Colonic mucosa (tissue), 4 donors: ENCODE measurements at regions of chr13 and their contacts with region 1.

Region 1: GRCh38 chr13:113393563-113394338 is 29.8 kb upstream of the GRTP1 start:
- DNase-seq: peak; percentile 78
- H3K4me3 ChIP-seq: peak overlapping the region; percentile 74
- H3K27ac ChIP-seq: peak overlapping the region; percentile 37
- H3K4me1 ChIP-seq: peaks cover 4% of the 10 kb centered on the region
- H3K27me3 ChIP-seq: no peaks in the 10 kb centered on the region
- CTCF ChIP-seq: peak; percentile 82

Region 2: GRCh38 chr13:112664501-112665203 is 729.1 kb before region 1 on chr13:
- intact Hi-C with region 1: no loop called
- DNase-seq: no peak
- H3K4me3 ChIP-seq: no peak overlapping the region
- H3K27ac ChIP-seq: no peak overlapping the region
- H3K4me1 ChIP-seq: no peaks in the 10 kb centered on the region
- H3K27me3 ChIP-seq: no peaks in the 10 kb centered on the region
- CTCF ChIP-seq: no peak

Region 3: DNA sequence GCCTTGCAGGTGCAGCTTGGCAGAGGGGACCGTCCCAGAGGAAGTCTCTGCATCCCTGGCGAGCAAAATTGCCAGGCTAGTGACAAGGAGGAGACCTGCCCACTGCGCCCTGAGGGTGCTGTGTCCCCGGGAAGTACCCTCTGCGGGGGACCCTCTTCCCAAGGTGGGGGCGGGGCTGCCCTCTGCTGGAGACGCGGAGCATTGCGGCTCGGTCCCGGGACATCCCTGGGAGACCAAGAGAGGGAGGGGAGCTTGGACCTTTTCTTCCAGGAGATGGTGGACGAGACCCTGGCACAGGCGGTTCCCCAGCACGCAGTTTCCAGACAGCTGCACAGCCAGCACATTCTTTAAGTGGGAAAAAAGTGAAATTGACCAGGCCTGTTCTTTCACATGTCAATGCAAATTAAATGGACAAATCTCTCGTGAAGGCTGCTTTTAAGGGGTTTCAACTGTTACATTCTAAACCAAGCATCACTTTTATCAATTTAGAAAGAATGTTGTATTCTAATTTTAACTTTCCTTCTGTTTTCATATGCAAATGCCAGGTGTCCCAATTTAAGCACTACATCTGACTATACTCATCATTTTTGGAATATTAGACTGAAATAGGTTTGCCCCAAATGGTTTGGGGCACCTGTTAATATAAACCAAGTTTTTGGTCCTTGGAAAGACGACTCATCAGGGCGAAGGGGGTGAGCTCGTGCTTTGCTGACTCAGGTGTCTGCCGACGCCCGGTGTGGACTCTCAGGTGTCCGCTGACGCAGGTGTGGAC is 364.1 kb before region 1 on chr13:
- intact Hi-C with region 1: loop called (anchors 10 kb)
- DNase-seq: peak; percentile 56
- H3K4me3 ChIP-seq: no peak overlapping the region
- H3K27ac ChIP-seq: no peak overlapping the region
- H3K4me1 ChIP-seq: no peaks in the 10 kb centered on the region
- H3K27me3 ChIP-seq: no peaks in the 10 kb centered on the region
- CTCF ChIP-seq: peak; percentile 91

Region 4: DNA sequence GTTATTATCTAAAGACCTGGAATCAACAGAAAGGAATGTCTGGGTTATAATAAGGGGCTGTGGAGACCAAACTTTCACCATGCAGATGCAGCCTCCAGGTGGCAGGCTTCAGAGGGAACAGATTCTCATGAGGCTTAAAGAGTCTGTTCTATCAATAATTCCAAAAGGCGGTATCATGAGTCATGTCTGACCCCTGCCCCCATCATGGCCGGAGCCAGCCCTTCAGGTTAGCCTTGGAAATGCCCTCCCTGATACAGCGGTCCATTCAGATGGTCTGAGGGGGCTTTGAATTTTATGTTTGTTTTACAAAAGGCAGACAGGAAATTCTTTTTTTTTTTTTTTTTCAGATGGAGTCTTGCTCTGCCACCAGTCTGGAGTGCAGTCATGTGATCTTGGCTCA is 118.4 kb before region 1 on chr13:
- intact Hi-C with region 1: loop called (anchors 5 kb)
- DNase-seq: peak; percentile 39
- H3K4me3 ChIP-seq: no peak overlapping the region
- H3K27ac ChIP-seq: no peak overlapping the region
- H3K4me1 ChIP-seq: no peaks in the 10 kb centered on the region
- H3K27me3 ChIP-seq: no peaks in the 10 kb centered on the region
- CTCF ChIP-seq: no peak

Region 5: GRCh38 chr13:113518076-113518803 is 124.5 kb after region 1 on chr13:
- intact Hi-C with region 1: no loop called
- DNase-seq: no peak
- H3K4me3 ChIP-seq: no peak overlapping the region
- H3K27ac ChIP-seq: no peak overlapping the region
- H3K4me1 ChIP-seq: no peaks in the 10 kb centered on the region
- H3K27me3 ChIP-seq: no peaks in the 10 kb centered on the region
- CTCF ChIP-seq: no peak